ENCODE measurements at regions of chr10 and their contacts with region 1.

Region 1: DNA sequence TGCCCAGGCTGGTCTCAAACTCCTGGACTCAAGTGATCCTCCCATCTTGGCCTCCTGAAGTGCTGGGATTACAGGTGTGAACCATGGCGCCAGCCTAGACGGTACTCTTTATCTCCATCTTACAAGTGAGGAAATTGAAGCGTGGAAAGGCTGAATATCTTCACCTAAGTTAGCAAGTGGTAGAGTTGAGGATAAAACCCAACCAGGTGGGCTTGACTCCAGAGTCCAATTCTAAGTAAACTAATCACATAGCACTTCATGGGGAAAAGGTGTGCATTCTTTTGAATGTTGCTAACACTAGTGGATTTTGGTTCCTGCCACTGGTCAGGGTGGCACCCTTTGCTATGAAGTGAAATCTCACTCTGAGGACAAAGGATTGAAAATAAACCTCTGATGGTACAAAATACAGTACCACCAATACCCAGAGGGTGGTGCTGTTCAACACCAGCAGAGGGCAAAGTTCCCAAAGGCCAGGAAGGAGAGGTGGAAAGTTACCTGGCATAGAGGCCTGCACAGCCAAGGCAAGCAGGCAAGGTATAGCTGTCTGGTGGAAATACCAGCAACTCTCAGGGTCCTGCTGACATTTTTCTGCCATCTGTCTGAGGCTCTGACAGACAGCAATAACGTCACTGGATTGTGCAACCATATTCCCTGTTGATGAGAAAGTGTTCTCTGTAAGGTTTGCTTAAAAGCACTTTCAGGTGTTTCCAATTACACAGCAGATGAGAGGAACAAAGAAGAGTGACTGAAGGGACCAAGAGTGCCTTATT is 17.6 kb downstream of the ZDHHC16 start:
- DNase-seq: peak in 4 of 5 donors; percentile 3 to 51 (median 32)
- H3K4me3 ChIP-seq: no peak overlapping the region
- H3K4me3 Mint-ChIP-seq: no peak overlapping the region
- H3K27ac ChIP-seq: no peak overlapping the region
- H3K27ac Mint-ChIP-seq: peak overlapping the region in 5 of 8 donors; percentile 0 to 92 (median 38)
- H3K4me1 ChIP-seq: no peaks in the 10 kb centered on the region
- H3K4me1 Mint-ChIP-seq: no peaks in the 10 kb centered on the region
- H3K27me3 ChIP-seq: no peaks in the 10 kb centered on the region
- H3K27me3 Mint-ChIP-seq: no peaks in the 10 kb centered on the region

Region 2: GRCh38 chr10:97479939-97480338 is 16.4 kb after region 1 on chr10:
- CTCF ChIA-PET with region 1: interaction called, 13 read pairs
- POLR2A ChIA-PET with region 1: no interaction called
- DNase-seq: no peak
- H3K4me3 ChIP-seq: no peak overlapping the region
- H3K4me3 Mint-ChIP-seq: no peak overlapping the region
- H3K27ac ChIP-seq: no peak overlapping the region
- H3K27ac Mint-ChIP-seq: no peak overlapping the region
- H3K4me1 ChIP-seq: no peaks in the 10 kb centered on the region
- H3K4me1 Mint-ChIP-seq: peaks cover 0 to 5% (median 0%) of the 10 kb centered on the region in 3 donors
- H3K27me3 ChIP-seq: no peaks in the 10 kb centered on the region
- H3K27me3 Mint-ChIP-seq: no peaks in the 10 kb centered on the region

Region 3: GRCh38 chr10:97553575-97554031 is 90.1 kb after region 1 on chr10:
- CTCF ChIA-PET with region 1: interaction called, 24 read pairs
- POLR2A ChIA-PET with region 1: no interaction called
- DNase-seq: peak; percentile 14 to 67 (median 20)
- H3K4me3 ChIP-seq: no peak overlapping the region
- H3K4me3 Mint-ChIP-seq: no peak overlapping the region
- H3K27ac ChIP-seq: no peak overlapping the region
- H3K27ac Mint-ChIP-seq: no peak overlapping the region
- H3K4me1 ChIP-seq: no peaks in the 10 kb centered on the region
- H3K4me1 Mint-ChIP-seq: no peaks in the 10 kb centered on the region
- H3K27me3 ChIP-seq: no peaks in the 10 kb centered on the region
- H3K27me3 Mint-ChIP-seq: no peaks in the 10 kb centered on the region

Measured in CD8-positive, alpha-beta memory T cell (primary cell).